Psoas muscle (tissue), 8 donors: ENCODE measurements at regions of chr19 and their contacts with region 1.

Region 1: DNA sequence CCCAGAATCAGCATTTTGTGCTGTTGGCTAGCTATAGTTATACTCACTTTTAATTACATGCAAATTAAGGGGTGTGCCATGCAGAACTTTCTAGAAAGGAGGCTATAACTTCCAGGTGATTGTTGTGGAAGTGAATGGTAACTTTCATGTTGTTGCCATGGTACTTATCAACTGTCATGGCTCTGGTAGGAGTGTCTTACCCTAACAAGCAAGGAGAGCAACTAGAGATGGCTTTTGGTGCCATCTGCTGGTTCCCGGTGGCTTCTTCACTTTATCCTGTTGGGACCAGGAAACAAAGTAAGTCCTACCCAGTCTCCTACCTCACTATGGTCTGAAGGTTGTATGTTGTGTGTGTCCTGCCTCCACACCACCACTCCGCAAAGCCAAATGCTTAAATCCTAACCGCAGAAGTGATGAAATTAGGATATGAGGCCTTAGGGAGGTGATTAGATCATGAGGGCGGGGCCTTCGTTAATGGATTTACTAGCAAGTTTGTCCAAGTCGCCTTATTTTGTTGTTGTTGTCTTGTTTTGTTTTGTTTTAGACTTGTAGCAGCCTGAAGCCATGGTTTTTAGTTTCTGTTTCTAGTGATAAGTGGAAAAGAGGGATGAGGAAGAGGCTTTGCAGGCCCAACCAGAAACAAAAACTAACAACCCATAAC is 22.6 kb downstream of the FBXL12 start:
- DNase-seq: peak; percentile 71 to 84
- ATAC-seq: peak; percentile 57 to 79 (median 72)
- H3K4me3 ChIP-seq: no peak overlapping the region
- H3K27ac ChIP-seq: no peak overlapping the region
- H3K4me1 ChIP-seq: no peaks in the 10 kb centered on the region
- H3K27me3 ChIP-seq: peaks cover 0 to 8% (median 0%) of the 10 kb centered on the region in 3 donors
- CTCF ChIP-seq: peak; percentile 81

Region 2: GRCh38 chr19:9140159-9140874 is 655.9 kb before region 1 on chr19 and contains the start of gene ZNF317:
- intact Hi-C with region 1: loop called (anchors 1 to 5 kb)
- DNase-seq: peak; percentile 89 to 95
- ATAC-seq: peak; percentile 97 to 100 (median 98)
- H3K4me3 ChIP-seq: peak within 1 kb of the TSS; percentile 85
- H3K27ac ChIP-seq: peak within 1 kb of the TSS; percentile 93
- H3K4me1 ChIP-seq: peaks cover 24% of the 10 kb centered on the region
- H3K27me3 ChIP-seq: no peaks in the 10 kb centered on the region
- CTCF ChIP-seq: no peak
- total RNA-seq, gene ZNF317: 13.7 to 23.6 (median 16.9) TPM

Region 3: GRCh38 chr19:9205501-9206113 is 590.6 kb before region 1 on chr19:
- intact Hi-C with region 1: loop called (anchors 2 to 5 kb)
- DNase-seq: peak; percentile 61 to 74
- ATAC-seq: peak in 1 of 4 donors; percentile 54
- H3K4me3 ChIP-seq: peak overlapping the region; percentile 54
- H3K27ac ChIP-seq: no peak overlapping the region
- H3K4me1 ChIP-seq: no peaks in the 10 kb centered on the region
- H3K27me3 ChIP-seq: peaks cover 0 to 4% (median 0%) of the 10 kb centered on the region in 3 donors
- CTCF ChIP-seq: peak; percentile 78

Region 4: DNA sequence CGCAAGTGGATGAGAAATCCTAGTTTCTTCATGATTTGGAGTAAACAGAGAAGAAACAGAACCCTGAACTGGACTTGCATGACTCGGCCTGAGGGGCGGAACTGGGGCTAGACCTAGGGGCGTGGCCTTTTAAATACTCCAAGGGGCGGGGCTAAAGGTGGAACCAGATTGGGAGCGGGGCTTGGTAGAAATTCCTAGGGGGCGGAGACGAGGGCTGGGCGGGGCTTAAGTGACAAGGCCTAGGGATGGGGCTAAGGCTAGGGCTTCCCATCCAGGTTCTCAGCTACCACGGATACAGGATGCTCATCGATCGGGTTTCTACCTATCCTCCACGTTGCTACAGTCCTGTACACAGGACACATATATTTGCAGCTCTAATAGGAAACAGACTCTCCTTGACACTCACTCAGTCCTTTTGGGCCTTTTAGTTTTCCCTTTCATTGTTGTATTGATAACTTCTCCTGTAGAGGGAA is 486.2 kb before region 1 on chr19:
- intact Hi-C with region 1: loop called in 1 of 2 experiments (anchors 5 kb)
- DNase-seq: peak; percentile 88 to 91
- ATAC-seq: peak; percentile 85 to 90 (median 88)
- H3K4me3 ChIP-seq: peak overlapping the region; percentile 81
- H3K27ac ChIP-seq: peak overlapping the region; percentile 87
- H3K4me1 ChIP-seq: peaks cover 10% of the 10 kb centered on the region
- H3K27me3 ChIP-seq: no peaks in the 10 kb centered on the region
- CTCF ChIP-seq: no peak

Region 5: GRCh38 chr19:9435279-9436268 is 360.7 kb before region 1 on chr19 and contains the start of gene ZNF266:
- intact Hi-C with region 1: loop called in 1 of 2 experiments (anchors 5 kb)
- DNase-seq: peak; percentile 90 to 94
- ATAC-seq: peak; percentile 97 to 100 (median 98)
- H3K4me3 ChIP-seq: peak within 1 kb of the TSS; percentile 82
- H3K27ac ChIP-seq: peak within 1 kb of the TSS; percentile 96
- H3K4me1 ChIP-seq: peaks cover 12% of the 10 kb centered on the region
- H3K27me3 ChIP-seq: no peaks in the 10 kb centered on the region
- CTCF ChIP-seq: peak; percentile 76
- total RNA-seq, gene ZNF266: 4.1 to 8.1 (median 5.4) TPM

Region 6: DNA sequence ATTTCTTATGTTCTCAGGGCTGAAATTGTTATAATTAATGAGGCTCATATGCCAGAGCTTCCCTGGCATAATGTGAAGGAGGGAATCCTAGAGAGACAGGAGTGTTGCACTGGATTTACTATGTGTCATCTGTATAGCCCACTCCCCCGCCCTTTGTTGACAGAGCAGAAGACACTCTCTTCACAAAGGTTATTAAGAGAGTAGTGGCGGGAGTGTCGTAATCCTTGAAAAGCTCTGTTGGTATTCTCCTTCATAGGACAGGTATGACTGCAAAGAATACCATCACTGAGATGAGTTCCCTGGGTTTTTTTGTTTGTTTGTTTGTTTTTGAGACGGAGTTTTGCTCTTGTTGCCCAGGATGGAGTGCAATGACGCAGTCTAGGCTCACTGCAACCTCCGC is 226.0 kb before region 1 on chr19:
- intact Hi-C with region 1: no loop called
- DNase-seq: no peak
- ATAC-seq: no peak
- H3K4me3 ChIP-seq: no peak overlapping the region
- H3K27ac ChIP-seq: no peak overlapping the region
- H3K4me1 ChIP-seq: no peaks in the 10 kb centered on the region
- H3K27me3 ChIP-seq: peaks cover 0 to 2% (median 0%) of the 10 kb centered on the region in 3 donors
- CTCF ChIP-seq: no peak

Region 7: GRCh38 chr19:9584073-9584833 is 212.0 kb before region 1 on chr19 and contains the start of gene ZNF121:
- intact Hi-C with region 1: loop called in 1 of 2 experiments (anchors 2 kb)
- DNase-seq: peak; percentile 86 to 91
- ATAC-seq: peak; percentile 95 to 99 (median 98)
- H3K4me3 ChIP-seq: peak within 1 kb of the TSS; percentile 99
- H3K27ac ChIP-seq: peak within 1 kb of the TSS; percentile 98
- H3K4me1 ChIP-seq: peaks cover 19% of the 10 kb centered on the region
- H3K27me3 ChIP-seq: peaks cover 0 to 17% (median 0%) of the 10 kb centered on the region in 3 donors
- CTCF ChIP-seq: no peak
- total RNA-seq, gene ZNF121: 15.6 to 32.2 (median 18.0) TPM

Region 8: GRCh38 chr19:9627856-9628255 is 168.4 kb before region 1 on chr19:
- intact Hi-C with region 1: loop called (anchors 2 to 5 kb)
- DNase-seq: no peak
- ATAC-seq: no peak
- H3K4me3 ChIP-seq: no peak overlapping the region
- H3K27ac ChIP-seq: no peak overlapping the region
- H3K4me1 ChIP-seq: no peaks in the 10 kb centered on the region
- H3K27me3 ChIP-seq: no peaks in the 10 kb centered on the region
- CTCF ChIP-seq: no peak

Region 9: GRCh38 chr19:9751446-9751845 is 44.8 kb before region 1 on chr19:
- intact Hi-C with region 1: no loop called
- DNase-seq: no peak
- ATAC-seq: no peak
- H3K4me3 ChIP-seq: no peak overlapping the region
- H3K27ac ChIP-seq: no peak overlapping the region
- H3K4me1 ChIP-seq: no peaks in the 10 kb centered on the region
- H3K27me3 ChIP-seq: no peaks in the 10 kb centered on the region
- CTCF ChIP-seq: no peak

Region 10: DNA sequence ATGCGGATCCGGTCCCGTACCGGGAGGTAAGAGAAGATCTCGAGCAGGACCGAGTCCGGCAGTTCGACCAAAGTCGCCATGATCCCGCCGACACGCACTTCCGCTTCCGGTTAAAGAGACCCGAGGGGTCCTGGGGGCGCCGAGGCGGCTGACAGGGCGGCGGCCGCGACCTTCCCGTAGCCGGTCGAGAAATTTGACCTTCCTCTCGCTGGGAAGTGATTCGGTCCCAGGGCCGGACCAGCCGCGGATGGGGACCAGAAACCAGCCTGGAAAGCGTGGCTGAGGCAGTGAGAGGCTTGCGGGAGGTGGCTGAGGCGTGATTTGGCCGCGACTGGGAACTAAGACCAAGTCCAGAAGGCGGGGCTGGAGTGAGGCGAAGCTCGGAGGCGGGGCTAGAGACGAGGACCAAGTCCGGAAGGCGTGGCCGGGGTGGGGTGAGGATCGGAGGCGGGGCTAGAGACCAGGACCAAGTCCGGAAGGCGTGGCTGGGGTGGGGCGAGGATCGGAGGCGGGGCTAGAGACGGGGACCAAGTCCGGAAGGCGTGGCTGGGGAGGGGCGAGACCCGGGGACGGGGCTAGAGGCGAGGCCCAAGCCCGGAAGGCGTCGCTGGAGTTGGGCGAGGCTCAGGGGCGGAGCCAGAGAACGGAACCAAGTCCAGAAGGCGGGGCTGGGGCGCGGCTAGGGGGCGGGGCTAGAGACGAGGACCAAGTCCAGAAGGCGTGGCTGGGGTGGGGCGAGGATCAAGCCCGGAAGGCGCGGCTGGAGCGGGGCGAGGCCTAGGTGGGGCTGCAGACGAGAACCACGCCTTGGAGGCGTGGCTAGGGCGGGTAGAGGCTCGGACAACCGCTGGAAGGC is 22.7 kb after region 1 on chr19 and contains the start of gene FBXL12:
- intact Hi-C with region 1: no loop called
- DNase-seq: peak; percentile 100
- ATAC-seq: peak; percentile 94 to 96 (median 94)
- H3K4me3 ChIP-seq: peak within 1 kb of the TSS; percentile 98
- H3K27ac ChIP-seq: peak within 1 kb of the TSS; percentile 93
- H3K4me1 ChIP-seq: peaks cover 13% of the 10 kb centered on the region
- H3K27me3 ChIP-seq: no peaks in the 10 kb centered on the region
- CTCF ChIP-seq: no peak
- total RNA-seq, gene FBXL12: 10.4 to 22.1 (median 12.9) TPM